BJ (cell line): ENCODE measurements at regions of chr14 and their contacts with region 1.

Region 1: GRCh38 chr14:99899578-99900178 is 106.5 kb downstream of the EML1 start:
- DNase-seq: no peak
- H3K4me3 ChIP-seq: no peak overlapping the region
- H3K27me3 ChIP-seq: no peaks in the 10 kb centered on the region
- CTCF ChIP-seq: peak; percentile 49

Region 2: DNA sequence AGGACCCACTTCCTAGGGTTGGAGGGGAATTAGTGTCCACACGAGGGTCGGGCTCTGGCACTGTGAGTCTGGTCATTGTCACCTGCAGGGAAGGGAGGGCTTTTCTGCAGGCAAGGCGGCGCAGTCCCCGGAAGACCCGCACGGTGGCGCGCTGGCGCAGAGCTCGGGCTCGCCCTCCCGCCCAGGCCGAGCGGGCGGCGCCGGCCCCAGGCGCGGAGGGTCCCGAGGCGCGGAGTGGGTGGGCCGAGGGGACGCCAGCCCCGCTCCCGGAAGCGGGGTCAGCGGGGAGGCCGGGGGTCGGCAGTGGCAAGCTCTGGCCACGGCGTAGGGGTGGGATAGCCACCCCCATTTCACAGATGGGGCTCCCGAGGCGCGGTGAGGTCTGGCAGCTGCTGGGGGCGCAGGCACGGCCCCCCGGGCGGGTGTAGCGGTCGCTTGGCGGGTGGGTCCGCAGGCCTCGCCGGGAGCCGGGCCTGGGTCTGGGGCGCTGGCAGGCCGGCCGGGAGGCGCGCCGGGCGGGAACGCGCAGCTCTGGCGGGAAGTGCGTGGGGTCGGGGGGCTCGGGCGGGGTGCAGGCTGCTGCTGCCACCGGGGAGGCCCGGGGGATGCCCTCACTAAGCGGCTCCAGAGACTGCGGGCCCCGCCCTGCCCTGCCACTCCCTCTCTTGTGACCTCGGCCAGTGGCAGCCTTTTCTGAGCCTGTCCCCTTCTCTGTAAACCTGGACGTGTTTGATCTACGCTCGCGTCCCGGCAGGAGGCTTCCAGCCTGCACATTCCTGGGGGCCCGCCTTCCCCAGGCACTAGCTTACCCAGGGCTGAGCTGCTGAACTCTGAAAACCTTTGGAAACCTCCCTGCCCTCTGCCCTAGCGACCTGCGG is 169.4 kb before region 1 on chr14:
- CTCF ChIA-PET with region 1: interaction called, 21 read pairs
- POLR2A ChIA-PET with region 1: no interaction called
- DNase-seq: no peak
- H3K4me3 ChIP-seq: peak overlapping the region; percentile 50
- H3K27me3 ChIP-seq: peaks cover 9% of the 10 kb centered on the region
- CTCF ChIP-seq: peak; percentile 75

Region 3: GRCh38 chr14:99862136-99862535 is 37.5 kb before region 1 on chr14:
- CTCF ChIA-PET with region 1: no interaction called
- POLR2A ChIA-PET with region 1: no interaction called
- DNase-seq: no peak
- H3K4me3 ChIP-seq: no peak overlapping the region
- H3K27me3 ChIP-seq: no peaks in the 10 kb centered on the region
- CTCF ChIP-seq: no peak

Region 4: DNA sequence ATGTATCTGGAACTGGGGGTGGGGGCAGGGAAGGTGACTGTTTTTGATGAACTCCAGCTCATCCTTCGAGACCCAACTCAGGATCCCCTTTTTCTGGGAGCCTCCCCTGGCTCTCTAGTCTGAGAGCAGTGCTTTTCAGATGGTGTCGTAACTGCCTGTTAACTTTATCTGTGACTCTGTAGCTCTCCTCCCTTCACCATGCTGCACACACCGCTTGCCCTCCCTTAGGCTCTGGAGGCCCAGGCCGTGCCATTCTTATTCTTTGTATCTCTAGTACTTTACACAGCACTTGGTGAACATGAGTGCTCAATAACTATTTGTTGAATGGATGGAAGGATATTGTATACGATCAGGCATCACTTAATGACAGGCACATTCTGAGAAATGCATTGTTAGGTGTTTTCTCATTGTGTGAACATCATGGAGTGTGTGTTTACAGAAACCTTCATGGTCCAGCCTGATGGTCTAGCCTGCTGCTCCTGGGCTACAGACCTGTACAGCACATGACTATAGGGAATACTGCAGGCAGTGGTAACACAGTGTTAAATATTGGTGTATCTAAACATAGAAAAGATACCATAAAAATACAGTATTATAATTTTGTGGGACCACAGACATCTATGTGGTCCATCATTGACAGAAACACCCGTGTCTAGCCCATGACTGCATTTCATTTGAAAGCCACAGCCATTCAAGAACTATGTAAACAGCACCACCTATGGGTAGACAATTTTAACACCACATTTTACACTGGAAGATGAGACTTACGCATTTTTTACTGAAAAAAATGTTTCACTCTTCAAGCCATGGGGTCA is 14.6 kb before region 1 on chr14:
- CTCF ChIA-PET with region 1: interaction called, 23 read pairs
- POLR2A ChIA-PET with region 1: no interaction called
- DNase-seq: no peak
- H3K4me3 ChIP-seq: no peak overlapping the region
- H3K27me3 ChIP-seq: no peaks in the 10 kb centered on the region
- CTCF ChIP-seq: peak; percentile 68

Region 5: GRCh38 chr14:99910337-99911309 is 10.9 kb after region 1 on chr14:
- CTCF ChIA-PET with region 1: interaction called, 14 read pairs
- POLR2A ChIA-PET with region 1: no interaction called
- DNase-seq: peak; percentile 85
- H3K4me3 ChIP-seq: no peak overlapping the region
- H3K27me3 ChIP-seq: no peaks in the 10 kb centered on the region
- CTCF ChIP-seq: no peak

Region 6: GRCh38 chr14:99918781-99919180 is 19.1 kb after region 1 on chr14:
- CTCF ChIA-PET with region 1: interaction called, 14 read pairs
- POLR2A ChIA-PET with region 1: no interaction called
- DNase-seq: no peak
- H3K4me3 ChIP-seq: no peak overlapping the region
- H3K27me3 ChIP-seq: no peaks in the 10 kb centered on the region
- CTCF ChIP-seq: no peak

Region 7: DNA sequence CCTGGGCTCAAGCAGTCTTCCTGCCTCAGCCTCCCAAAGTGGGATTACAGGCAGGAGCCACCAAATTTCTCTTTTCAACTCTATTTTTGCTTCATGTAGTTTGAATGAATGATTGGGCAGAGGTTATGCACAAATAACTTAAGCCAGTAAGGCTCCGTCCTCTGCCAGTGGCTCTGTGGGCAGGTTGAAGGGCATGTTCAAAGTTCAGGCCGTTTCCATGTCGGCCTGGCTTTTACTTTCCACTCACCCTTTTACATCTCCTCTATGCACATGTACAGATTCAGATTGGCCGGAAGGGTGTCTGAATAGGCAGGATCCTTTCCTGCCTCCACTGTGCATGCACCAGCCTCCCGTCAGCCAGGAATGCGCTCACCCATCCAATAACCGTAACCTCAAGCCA is 25.8 kb after region 1 on chr14:
- CTCF ChIA-PET with region 1: interaction called, 10 read pairs
- POLR2A ChIA-PET with region 1: no interaction called
- DNase-seq: no peak
- H3K4me3 ChIP-seq: no peak overlapping the region
- H3K27me3 ChIP-seq: no peaks in the 10 kb centered on the region
- CTCF ChIP-seq: no peak

Region 8: GRCh38 chr14:99946652-99947489 is 47.2 kb after region 1 on chr14:
- CTCF ChIA-PET with region 1: interaction called, 10 read pairs
- POLR2A ChIA-PET with region 1: no interaction called
- DNase-seq: no peak
- H3K4me3 ChIP-seq: no peak overlapping the region
- H3K27me3 ChIP-seq: no peaks in the 10 kb centered on the region; the same call in 1 of the 2 replicates
- CTCF ChIP-seq: peak; percentile 93